Caco-2 (cell line): ENCODE measurements at regions of chr14 and their contacts with region 1.

Region 1: GRCh38 chr14:90263748-90264449 is 7.5 kb downstream of the PSMC1 start:
- DNase-seq: no peak
- H3K4me3 ChIP-seq: no peak overlapping the region
- H3K4me3 Mint-ChIP-seq: no peak overlapping the region
- H3K27ac Mint-ChIP-seq: no peak overlapping the region
- H3K4me1 ChIP-seq: no peaks in the 10 kb centered on the region
- H3K4me1 Mint-ChIP-seq: no peaks in the 10 kb centered on the region
- H3K27me3 ChIP-seq: no peaks in the 10 kb centered on the region
- H3K27me3 Mint-ChIP-seq: no peaks in the 10 kb centered on the region
- CTCF ChIP-seq: no peak

Region 2: DNA sequence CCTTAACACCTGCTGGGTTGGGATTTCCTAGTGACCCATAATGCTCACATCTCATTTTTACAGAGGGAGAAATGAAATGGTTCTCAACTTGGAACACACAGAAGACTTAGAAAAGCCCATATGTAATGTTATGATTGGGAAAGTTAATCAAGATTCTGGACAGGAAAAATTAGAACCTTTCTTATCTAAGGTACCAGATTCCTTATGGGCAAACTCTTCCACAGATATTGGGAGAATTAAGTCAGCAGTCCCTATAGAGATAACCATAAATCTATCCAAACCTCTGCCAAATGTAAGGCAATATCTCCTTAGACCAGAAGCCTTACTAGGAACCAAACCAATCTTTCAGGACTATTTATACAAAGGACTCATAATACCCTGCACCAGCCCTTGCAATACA is 21.5 kb before region 1 on chr14:
- CTCF ChIA-PET with region 1: no interaction called
- POLR2A ChIA-PET with region 1: interaction called, 12 read pairs
- intact Hi-C with region 1: no loop called
- DNase-seq: no peak
- H3K4me3 ChIP-seq: no peak overlapping the region
- H3K4me3 Mint-ChIP-seq: no peak overlapping the region
- H3K27ac Mint-ChIP-seq: no peak overlapping the region
- H3K4me1 ChIP-seq: no peaks in the 10 kb centered on the region
- H3K4me1 Mint-ChIP-seq: no peaks in the 10 kb centered on the region
- H3K27me3 ChIP-seq: no peaks in the 10 kb centered on the region
- H3K27me3 Mint-ChIP-seq: no peaks in the 10 kb centered on the region
- CTCF ChIP-seq: no peak